Lower leg skin (tissue), 4 donors: ENCODE measurements at regions of chr17 and their contacts with region 1.

Region 1: GRCh38 chr17:8255499-8255898 is 6.4 kb downstream of the PFAS start:
- DNase-seq: no peak
- H3K4me3 ChIP-seq: no peak overlapping the region
- CTCF ChIP-seq: no peak
- POLR2A ChIP-seq: no peak

Region 2: GRCh38 chr17:8138672-8139371 is 116.7 kb before region 1 on chr17:
- intact Hi-C with region 1: no loop called
- DNase-seq: peak; percentile 94 to 99
- H3K4me3 ChIP-seq: no peak overlapping the region
- CTCF ChIP-seq: peak in 1 of 3 donors; percentile 96
- POLR2A ChIP-seq: peak in 1 of 2 donors; percentile 6

Region 3: GRCh38 chr17:8156246-8156992 is 99.1 kb before region 1 on chr17:
- intact Hi-C with region 1: no loop called
- DNase-seq: peak; percentile 100
- H3K4me3 ChIP-seq: peak overlapping the region; percentile 86
- CTCF ChIP-seq: no peak
- POLR2A ChIP-seq: peak in 1 of 2 donors; percentile 99

Region 4: GRCh38 chr17:8237886-8238285 is 17.6 kb before region 1 on chr17:
- intact Hi-C with region 1: loop called (anchors 2 kb)
- DNase-seq: no peak
- H3K4me3 ChIP-seq: no peak overlapping the region
- CTCF ChIP-seq: no peak
- POLR2A ChIP-seq: no peak

Region 5: DNA sequence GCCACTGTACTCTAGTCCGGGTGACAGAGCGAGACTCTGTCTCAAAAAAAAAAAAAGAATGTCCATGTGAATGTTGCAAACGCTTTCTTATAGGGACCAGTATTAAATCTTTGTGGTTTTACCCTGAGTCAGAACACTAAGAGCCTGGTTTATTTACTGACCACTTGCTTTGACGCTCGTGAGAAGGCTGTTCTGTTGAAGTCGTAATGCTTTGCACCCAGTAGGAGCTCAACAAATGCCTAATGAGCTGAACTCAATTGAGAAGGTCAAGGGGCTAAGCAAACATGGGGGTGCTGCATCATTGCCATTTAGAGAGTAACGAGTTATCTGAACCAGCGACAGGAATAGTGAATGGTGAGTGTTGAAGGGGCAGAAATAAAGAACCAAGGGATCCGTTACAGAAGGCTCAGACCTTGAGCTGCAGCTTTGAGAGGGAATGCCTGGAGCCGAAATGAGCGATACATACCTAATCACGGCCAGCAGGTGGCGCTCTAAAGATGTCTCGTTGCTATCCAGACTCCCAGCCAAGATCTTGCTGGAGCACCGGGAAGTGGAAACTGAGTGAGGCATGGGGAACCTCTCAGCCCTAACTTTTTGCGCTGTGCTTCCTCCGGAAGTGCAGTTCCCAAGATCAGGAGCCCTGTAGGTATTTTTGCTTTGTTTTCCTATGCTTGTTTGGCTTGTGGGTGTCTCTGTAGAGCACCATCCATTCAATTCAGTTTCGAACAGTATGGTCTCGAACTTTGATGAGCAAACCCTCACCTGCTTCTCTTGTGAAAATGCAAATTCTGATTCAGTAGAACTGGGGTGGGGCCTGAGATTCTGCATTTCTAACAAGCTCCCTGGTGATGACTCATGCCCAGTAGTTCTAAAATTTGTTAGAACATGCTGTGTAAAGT is 154.7 kb after region 1 on chr17:
- intact Hi-C with region 1: no loop called
- DNase-seq: peak; percentile 82 to 97
- H3K4me3 ChIP-seq: no peak overlapping the region
- CTCF ChIP-seq: peak in 1 of 3 donors; percentile 73
- POLR2A ChIP-seq: no peak